ENCODE measurements at regions of chr3 and their contacts with region 1.

Region 1: DNA sequence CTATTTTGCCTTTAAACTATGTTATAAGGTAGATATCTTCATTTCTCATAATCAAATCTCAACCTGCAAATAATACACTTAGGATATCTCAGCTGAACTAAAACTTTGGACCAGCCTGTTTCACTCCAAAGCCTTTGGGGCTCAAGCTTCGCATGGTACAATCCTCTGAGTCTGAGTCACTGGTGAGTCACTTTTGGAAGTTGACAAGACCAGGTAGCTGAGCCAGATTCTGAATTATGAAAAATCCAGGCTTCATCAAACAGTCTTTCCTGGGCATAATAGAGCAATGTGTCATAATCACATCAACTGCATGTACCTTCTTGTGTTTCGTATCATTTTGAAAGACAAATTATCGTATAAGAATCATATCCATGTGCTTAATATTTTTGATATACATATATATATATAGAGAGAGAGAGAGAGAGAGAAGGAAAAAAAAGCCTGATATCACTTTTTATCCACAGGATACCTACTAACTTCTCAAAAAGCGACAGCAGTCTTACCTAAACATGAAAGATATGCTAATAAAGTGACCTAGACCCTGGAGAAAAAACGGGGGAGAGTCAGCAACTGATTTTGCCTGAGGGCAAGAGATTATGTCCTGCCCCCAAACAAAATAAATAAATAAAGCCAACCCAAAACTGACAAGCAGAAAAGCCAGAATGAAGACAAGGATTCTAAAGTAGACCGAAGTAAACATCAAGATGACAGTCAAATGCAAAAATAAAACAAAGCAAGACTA is 263.9 kb upstream of the TGFBR2 start:
- DNase-seq: peak; percentile 94
- H3K4me3 ChIP-seq: peak overlapping the region in 1 of 3 experiments; percentile 32
- H3K27ac ChIP-seq: peak overlapping the region; percentile 98
- H3K4me1 ChIP-seq: peaks cover 62% of the 10 kb centered on the region
- H3K27me3 ChIP-seq: no peaks in the 10 kb centered on the region
- CTCF ChIP-seq: no peak
- POLR2A ChIP-seq: no peak

Region 2: DNA sequence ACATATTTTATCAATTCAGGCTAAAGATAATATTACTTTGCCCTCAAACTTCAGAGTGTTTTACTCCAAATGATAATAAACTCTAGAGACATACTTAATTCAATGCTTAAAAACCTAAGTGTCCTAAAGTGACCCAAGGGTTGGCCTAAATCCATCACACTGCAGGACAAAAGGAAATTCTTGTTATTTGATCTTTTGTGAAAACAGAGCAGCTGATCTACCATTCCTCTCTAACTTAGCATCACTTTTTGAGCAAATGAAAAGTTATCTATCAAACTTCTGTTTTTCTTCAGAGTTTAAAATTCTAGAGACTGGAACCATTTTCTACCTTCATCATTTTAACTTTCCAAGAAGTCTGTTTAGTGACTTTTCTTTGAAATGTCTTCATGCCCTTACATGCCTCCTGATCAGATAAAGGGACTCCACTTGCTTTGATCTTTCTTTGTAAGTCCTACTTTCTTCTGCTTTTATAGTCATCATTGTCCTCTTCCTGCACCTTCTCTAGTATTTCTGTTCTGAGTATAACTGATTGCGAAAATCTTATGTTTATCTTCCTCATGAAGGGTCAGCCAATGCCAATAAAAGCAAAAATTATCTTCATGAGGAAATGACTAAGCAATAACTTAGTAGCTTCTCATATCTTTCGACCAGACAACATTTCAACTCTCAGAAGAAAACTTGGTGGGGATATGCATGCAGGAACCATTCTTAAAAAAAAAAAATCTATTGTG is 114.8 kb before region 1 on chr3:
- CTCF ChIA-PET with region 1: no interaction called
- POLR2A ChIA-PET with region 1: no interaction called
- dilution Hi-C with region 1: no loop called
- intact Hi-C with region 1: loop called (anchors 2 kb)
- DNase-seq: peak; percentile 90
- H3K4me3 ChIP-seq: no peak overlapping the region
- H3K27ac ChIP-seq: peak overlapping the region; percentile 67
- H3K4me1 ChIP-seq: peaks cover 26% of the 10 kb centered on the region
- H3K27me3 ChIP-seq: no peaks in the 10 kb centered on the region
- CTCF ChIP-seq: no peak
- POLR2A ChIP-seq: no peak

Region 3: GRCh38 chr3:30511524-30512278 is 169.2 kb after region 1 on chr3:
- CTCF ChIA-PET with region 1: interaction called, 4 read pairs
- POLR2A ChIA-PET with region 1: no interaction called
- dilution Hi-C with region 1: no loop called
- intact Hi-C with region 1: loop called (anchors 1 kb)
- DNase-seq: peak; percentile 64
- H3K4me3 ChIP-seq: no peak overlapping the region
- H3K27ac ChIP-seq: peak overlapping the region; percentile 72
- H3K4me1 ChIP-seq: peaks cover 49% of the 10 kb centered on the region
- H3K27me3 ChIP-seq: no peaks in the 10 kb centered on the region
- CTCF ChIP-seq: no peak
- POLR2A ChIP-seq: no peak

Region 4: DNA sequence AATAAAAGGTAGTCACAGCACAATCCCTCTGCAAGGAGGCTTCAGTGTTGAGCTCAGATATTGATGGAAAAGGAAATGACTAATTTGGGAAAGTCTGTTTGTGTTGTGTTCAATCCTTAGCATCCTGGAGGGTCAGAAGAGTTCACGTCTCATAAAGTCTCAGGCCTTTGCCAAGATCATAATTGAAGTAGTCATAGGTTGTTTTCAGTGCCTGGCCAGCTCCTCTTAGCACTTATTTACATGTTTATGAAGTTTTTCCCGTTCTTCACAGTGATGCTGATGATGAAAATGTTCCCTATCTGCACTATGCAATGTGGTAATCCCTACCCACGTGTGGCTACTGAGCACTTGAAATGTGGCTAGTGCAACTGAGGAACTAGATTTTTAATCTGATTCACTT is 202.3 kb after region 1 on chr3:
- CTCF ChIA-PET with region 1: interaction called, 3 read pairs
- POLR2A ChIA-PET with region 1: interaction called, 3 read pairs
- dilution Hi-C with region 1: no loop called
- intact Hi-C with region 1: loop called (anchors 1 kb)
- DNase-seq: peak; percentile 99
- H3K4me3 ChIP-seq: no peak overlapping the region
- H3K27ac ChIP-seq: peak overlapping the region; percentile 95
- H3K4me1 ChIP-seq: peaks cover 37% of the 10 kb centered on the region
- H3K27me3 ChIP-seq: no peaks in the 10 kb centered on the region
- CTCF ChIP-seq: no peak
- POLR2A ChIP-seq: no peak

Region 5: DNA sequence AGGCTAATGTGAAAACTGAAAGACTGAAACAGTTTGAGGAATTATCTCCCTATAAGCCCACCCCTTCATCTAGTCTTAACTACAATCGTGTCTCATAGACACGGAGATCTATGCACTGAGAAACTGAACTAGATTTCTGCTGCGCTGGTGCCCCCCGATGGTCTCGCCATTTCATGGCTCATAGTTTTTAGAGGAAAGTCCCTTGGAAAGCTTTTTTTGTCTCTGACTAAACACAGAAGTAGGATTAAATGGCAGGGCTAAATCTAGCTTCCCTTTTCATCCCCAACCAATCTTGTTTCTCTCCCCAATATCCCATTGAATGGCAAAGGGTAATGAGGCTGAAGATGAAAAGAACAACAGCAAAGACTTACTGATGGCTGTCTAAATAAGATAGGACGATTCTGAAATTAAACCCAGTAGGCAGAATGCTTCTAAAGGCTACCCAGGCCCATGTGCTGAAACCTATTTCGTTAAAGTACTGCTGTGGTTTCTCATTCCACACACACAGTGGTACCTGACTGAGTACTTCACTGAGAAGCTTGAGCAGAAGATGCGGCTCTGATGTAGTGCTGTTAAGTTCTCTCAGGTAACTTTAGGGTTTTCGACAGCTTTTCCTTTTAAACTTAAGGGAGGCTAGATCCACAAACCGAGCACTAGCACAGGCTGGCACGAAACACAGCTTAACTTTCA is 409.3 kb after region 1 on chr3:
- CTCF ChIA-PET with region 1: interaction called, 3 read pairs
- POLR2A ChIA-PET with region 1: no interaction called
- dilution Hi-C with region 1: no loop called
- intact Hi-C with region 1: loop called (anchors 2 kb)
- DNase-seq: peak; percentile 78
- H3K4me3 ChIP-seq: no peak overlapping the region
- H3K27ac ChIP-seq: no peak overlapping the region
- H3K4me1 ChIP-seq: peaks cover 21% of the 10 kb centered on the region
- H3K27me3 ChIP-seq: no peaks in the 10 kb centered on the region
- CTCF ChIP-seq: peak; percentile 49 to 65
- POLR2A ChIP-seq: no peak